Natural killer cell (primary cell): ENCODE measurements at regions of chr6 and their contacts with region 1.

Region 1: GRCh38 chr6:11224252-11224965 is 8.1 kb downstream of the NEDD9 start:
- DNase-seq: peak; percentile 57 to 74
- ATAC-seq: peak; percentile 73 to 85 (median 80)
- H3K4me3 ChIP-seq: peak overlapping the region; percentile 16
- H3K4me3 Mint-ChIP-seq: peak overlapping the region; percentile 71
- H3K27ac ChIP-seq: peak overlapping the region; percentile 92
- H3K27ac Mint-ChIP-seq: peak overlapping the region; percentile 98 to 99
- H3K4me1 ChIP-seq: peaks cover 54% of the 10 kb centered on the region
- H3K4me1 Mint-ChIP-seq: peaks cover 95 to 97% of the 10 kb centered on the region in 2 donors
- H3K27me3 ChIP-seq: no peaks in the 10 kb centered on the region
- H3K27me3 Mint-ChIP-seq: no peaks in the 10 kb centered on the region
- CTCF ChIP-seq: no peak

Region 2: DNA sequence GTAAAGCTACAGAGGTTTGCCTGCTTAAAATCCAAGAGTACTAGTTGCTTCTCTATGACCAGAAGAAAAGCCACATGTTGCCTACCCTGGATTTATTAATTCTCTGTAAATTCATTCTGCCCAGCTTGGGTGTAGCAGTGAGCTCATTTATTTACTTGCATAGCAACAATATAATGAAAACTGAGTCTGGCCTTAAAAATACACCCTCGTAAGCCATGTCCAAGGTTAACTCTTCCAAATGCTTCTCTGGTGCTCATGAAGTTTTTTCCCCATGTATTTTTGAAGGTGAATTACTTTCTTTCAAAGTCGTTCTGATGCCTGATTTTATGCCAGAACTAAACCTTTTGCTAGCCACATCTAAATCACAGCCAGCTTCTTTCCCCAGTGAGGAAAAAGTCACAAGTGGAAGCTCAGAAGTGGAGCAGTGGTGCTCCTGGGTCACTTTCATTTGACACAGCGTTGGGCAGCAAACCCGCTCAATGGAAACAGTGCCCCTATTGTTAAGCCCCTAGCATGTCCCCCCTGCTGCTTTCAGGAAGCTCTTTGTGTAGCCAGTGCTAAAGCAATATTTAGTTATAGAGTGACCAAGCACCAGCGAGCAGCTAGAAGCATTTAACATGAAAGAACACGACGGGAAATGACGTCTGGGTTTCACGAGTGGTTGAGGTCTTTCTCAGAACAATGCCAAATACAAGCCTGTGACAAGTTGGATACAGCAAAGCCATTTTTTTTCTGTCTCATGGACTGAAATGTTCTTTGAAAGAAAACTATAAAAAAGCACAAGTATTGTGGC is 21.7 kb before region 1 on chr6:
- intact Hi-C with region 1: loop called (anchors 1 kb)
- DNase-seq: peak; percentile 37 to 69
- ATAC-seq: peak; percentile 81 to 88 (median 84)
- H3K4me3 ChIP-seq: no peak overlapping the region
- H3K4me3 Mint-ChIP-seq: peak overlapping the region; percentile 90
- H3K27ac ChIP-seq: peak overlapping the region; percentile 84
- H3K27ac Mint-ChIP-seq: peak overlapping the region; percentile 98 to 99
- H3K4me1 ChIP-seq: peaks cover 50% of the 10 kb centered on the region
- H3K4me1 Mint-ChIP-seq: peaks cover 83% of the 10 kb centered on the region in 2 donors
- H3K27me3 ChIP-seq: no peaks in the 10 kb centered on the region
- H3K27me3 Mint-ChIP-seq: no peaks in the 10 kb centered on the region
- CTCF ChIP-seq: no peak

Region 3: DNA sequence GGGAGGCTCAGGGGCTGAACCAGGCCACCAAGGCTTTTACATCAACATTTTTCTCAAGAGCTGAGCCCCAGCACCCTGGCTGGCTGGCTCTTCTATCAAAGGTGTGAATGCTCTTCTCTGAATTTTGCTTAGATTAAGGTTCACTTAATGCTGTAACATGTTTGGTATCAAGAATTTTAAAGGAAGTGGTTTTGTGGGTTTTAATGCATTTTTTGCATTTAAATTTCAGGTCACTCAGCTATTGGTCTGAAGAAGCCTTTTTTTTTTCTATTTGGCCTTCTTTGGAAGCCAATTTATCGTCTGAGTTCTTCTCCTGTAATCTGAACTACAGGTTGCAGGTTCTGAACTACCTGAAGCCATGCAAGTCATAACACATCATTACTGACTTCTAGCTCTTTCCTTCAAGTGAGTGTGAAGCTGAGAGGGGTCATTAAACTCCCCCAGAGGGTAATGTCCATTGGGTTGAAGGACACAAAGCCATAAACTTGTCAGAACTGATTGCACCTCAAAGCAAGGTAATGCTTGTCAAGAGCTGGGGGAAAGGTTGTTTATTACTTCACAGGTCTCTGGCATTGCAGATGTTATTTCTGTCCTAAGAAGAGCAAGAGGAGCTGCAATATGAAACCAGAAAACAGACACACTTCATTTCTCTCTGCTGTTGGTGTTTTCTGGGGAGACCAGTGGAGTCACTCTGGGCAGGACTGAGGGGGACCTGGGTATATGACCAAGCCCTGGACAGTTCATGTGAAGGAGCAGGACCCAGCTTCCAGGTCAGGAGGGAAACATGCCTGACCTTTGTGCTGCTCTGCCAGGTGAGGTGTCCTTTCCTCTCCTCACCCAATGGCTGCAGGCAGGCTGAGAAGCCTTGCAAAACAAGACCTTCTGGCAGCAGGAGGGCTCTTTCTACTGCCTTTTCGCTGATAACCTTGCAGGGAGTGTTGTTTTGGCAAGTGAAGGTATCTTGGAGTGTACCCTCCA is 34.1 kb after region 1 on chr6:
- intact Hi-C with region 1: loop called (anchors 1 kb)
- DNase-seq: peak; percentile 40 to 68
- ATAC-seq: peak; percentile 71 to 87 (median 85)
- H3K4me3 ChIP-seq: no peak overlapping the region
- H3K4me3 Mint-ChIP-seq: peak overlapping the region; percentile 69
- H3K27ac ChIP-seq: peak overlapping the region; percentile 74
- H3K27ac Mint-ChIP-seq: peak overlapping the region; percentile 85 to 93
- H3K4me1 ChIP-seq: peaks cover 56% of the 10 kb centered on the region
- H3K4me1 Mint-ChIP-seq: peaks cover 87 to 92% of the 10 kb centered on the region in 2 donors
- H3K27me3 ChIP-seq: no peaks in the 10 kb centered on the region
- H3K27me3 Mint-ChIP-seq: no peaks in the 10 kb centered on the region
- CTCF ChIP-seq: no peak

Region 4: DNA sequence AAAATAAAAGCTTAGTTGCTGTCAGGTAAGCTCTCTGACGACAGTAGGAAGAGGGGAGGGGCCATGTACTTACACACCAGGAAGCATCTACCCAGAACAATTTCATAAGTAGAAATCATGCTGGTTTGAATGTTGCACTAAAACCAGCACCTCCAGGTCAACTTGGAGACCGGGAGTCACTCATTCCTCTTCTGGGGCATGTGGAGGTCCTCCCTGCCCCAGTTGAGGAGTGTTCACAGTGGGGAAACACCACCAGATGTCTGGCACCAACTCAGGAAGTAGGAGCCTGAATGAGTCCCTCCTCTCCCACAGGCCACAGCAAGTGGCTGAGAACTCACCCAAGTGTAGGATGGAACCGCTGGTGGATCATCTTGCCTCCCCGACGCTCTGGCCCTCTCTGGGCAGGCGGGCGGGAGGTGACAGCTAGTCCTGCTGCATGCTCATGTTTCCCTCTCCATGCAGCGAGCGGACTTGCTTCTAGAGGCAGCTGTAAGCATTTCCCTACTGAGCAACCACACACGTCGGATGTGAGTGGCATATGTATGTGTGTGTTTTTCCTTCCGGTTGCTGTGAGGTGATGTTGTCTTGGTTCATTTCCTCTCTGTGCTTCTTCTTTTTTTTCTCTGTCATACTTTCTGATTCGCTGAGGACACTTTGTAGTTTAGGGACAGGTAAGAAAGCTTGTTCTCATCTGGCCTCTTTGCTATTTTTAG is 157.5 kb after region 1 on chr6:
- intact Hi-C with region 1: loop called (anchors 2 kb)
- DNase-seq: peak; percentile 66 to 90
- ATAC-seq: peak; percentile 89 to 96 (median 93)
- H3K4me3 ChIP-seq: peak overlapping the region; percentile 77
- H3K4me3 Mint-ChIP-seq: peak overlapping the region; percentile 97
- H3K27ac ChIP-seq: peak overlapping the region; percentile 90
- H3K27ac Mint-ChIP-seq: peak overlapping the region; percentile 95 to 97
- H3K4me1 ChIP-seq: peaks cover 43% of the 10 kb centered on the region
- H3K4me1 Mint-ChIP-seq: peaks cover 52 to 59% of the 10 kb centered on the region in 2 donors
- H3K27me3 ChIP-seq: no peaks in the 10 kb centered on the region
- H3K27me3 Mint-ChIP-seq: peaks cover 0 to 8% of the 10 kb centered on the region in 2 donors
- CTCF ChIP-seq: no peak

Region 5: DNA sequence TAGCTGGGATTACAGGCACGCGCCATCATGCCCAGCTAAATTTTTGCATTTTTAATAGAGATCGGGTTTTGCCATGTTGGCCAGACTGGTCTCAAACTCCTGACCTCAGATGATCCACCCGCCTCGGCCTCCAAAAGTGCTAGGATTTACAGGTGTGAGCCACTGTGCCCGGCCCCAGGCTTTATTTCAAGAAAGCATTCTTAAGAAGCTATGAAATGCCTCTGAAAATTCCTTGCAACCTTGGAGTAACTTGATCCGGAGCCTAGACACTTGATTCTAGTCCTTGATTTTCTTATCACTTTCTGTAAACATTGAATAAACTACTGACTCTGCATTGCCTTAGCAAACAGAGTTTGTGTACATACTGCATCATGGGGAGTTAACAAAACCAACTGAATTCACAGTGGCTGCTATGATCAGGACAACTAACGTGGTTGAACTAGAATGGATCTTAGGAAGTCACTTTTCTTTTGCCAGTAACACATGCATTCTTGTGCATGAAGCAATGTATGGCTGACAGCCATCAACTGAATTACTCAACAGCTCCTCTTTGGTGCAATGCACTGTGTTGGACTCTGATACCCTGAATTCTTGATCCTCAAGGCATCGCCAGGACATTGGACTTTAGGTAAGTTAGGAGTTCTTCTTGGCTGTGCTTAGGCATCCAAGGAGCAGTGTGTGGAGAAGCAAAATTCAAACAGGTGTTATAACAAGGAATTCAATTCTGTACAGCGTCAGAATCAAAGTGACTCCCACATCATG is 210.3 kb after region 1 on chr6:
- intact Hi-C with region 1: no loop called
- DNase-seq: no peak
- ATAC-seq: no peak
- H3K4me3 ChIP-seq: no peak overlapping the region
- H3K4me3 Mint-ChIP-seq: no peak overlapping the region
- H3K27ac ChIP-seq: no peak overlapping the region
- H3K27ac Mint-ChIP-seq: no peak overlapping the region
- H3K4me1 ChIP-seq: no peaks in the 10 kb centered on the region
- H3K4me1 Mint-ChIP-seq: peaks cover 21% of the 10 kb centered on the region in 2 donors
- H3K27me3 ChIP-seq: no peaks in the 10 kb centered on the region
- H3K27me3 Mint-ChIP-seq: peaks cover 0 to 4% of the 10 kb centered on the region in 2 donors
- CTCF ChIP-seq: no peak

Region 6: DNA sequence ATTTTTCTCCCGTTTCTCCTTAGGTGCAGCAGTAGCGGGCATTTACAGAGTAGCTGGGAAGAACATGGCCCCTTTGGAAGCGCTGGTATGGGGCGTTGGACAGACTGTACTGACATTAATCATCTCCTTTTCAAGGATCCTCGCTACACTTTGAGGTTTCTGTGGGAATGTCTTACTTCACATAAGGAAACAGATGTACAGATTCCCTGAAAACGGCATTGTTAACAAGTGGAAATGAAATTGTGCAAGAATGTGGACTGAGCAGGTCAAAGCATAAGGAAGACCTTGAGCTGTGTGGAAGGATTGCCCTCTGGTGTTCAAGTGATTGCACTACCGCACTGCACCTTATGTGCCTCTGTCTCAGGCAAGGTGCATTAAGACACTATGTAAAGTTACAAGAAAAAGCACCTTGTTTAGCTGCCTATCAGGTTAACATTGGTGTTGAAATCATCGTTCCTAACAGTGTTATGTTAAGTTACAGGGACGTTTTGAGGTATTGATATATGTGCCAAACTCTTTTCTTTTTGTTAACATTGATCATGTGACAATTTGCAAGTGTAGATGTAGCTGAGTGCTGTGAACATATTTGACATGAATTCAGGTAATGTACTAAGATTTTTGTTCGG is 351.1 kb after region 1 on chr6:
- intact Hi-C with region 1: no loop called
- DNase-seq: peak in 1 of 2 donors; percentile 73
- ATAC-seq: peak; percentile 85 to 99 (median 90)
- H3K4me3 ChIP-seq: no peak overlapping the region
- H3K4me3 Mint-ChIP-seq: no peak overlapping the region
- H3K27ac ChIP-seq: no peak overlapping the region
- H3K27ac Mint-ChIP-seq: no peak overlapping the region
- H3K4me1 ChIP-seq: no peaks in the 10 kb centered on the region
- H3K4me1 Mint-ChIP-seq: no peaks in the 10 kb centered on the region
- H3K27me3 ChIP-seq: no peaks in the 10 kb centered on the region
- H3K27me3 Mint-ChIP-seq: no peaks in the 10 kb centered on the region
- CTCF ChIP-seq: peak; percentile 66